ENCODE measurements at regions of chr7 and their contacts with region 1.

Region 1: DNA sequence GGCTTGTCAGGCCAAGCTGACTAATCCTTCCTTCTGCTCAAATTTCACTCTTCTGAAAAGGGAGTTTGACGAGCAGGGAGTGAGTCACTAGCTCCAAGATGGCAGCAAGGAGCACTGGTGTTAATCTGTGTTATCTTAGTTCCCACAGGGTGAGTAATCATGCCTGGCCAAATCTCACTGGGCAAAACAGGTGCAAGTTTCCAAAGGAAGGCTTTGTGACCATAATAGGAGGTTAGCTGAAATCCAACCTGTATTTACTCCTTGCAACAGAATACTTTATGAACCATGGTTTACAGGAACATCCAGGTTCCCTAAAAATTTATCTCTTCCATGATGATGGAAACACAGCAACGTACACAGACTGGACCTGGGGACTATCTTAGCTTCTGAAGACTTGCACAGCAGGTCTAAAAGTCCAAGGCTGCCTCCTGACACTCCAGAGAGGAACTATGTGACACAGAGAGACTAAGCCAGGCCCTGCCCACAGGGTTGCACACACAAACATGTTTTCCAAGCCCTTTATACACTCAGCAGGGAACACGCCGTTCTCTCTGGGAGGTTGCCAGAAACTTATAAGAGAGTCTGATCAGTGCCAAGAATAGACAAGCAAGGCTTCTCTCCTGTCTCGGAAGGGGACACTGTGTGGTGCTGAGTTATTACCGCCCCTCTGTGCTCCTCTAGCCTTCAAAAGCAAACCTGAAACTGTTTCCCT is 46.3 kb downstream of the PDK4 start:
- DNase-seq: peak; percentile 86 to 97
- H3K4me3 ChIP-seq: peak overlapping the region in 2 of 3 donors; percentile 26 to 54
- H3K27ac ChIP-seq: peak overlapping the region; percentile 97 to 98
- H3K4me1 ChIP-seq: peaks cover 16 to 18% of the 10 kb centered on the region in 2 donors
- H3K27me3 ChIP-seq: no peaks in the 10 kb centered on the region
- CTCF ChIP-seq: no peak
- POLR2A ChIP-seq: peak; percentile 29

Region 2: DNA sequence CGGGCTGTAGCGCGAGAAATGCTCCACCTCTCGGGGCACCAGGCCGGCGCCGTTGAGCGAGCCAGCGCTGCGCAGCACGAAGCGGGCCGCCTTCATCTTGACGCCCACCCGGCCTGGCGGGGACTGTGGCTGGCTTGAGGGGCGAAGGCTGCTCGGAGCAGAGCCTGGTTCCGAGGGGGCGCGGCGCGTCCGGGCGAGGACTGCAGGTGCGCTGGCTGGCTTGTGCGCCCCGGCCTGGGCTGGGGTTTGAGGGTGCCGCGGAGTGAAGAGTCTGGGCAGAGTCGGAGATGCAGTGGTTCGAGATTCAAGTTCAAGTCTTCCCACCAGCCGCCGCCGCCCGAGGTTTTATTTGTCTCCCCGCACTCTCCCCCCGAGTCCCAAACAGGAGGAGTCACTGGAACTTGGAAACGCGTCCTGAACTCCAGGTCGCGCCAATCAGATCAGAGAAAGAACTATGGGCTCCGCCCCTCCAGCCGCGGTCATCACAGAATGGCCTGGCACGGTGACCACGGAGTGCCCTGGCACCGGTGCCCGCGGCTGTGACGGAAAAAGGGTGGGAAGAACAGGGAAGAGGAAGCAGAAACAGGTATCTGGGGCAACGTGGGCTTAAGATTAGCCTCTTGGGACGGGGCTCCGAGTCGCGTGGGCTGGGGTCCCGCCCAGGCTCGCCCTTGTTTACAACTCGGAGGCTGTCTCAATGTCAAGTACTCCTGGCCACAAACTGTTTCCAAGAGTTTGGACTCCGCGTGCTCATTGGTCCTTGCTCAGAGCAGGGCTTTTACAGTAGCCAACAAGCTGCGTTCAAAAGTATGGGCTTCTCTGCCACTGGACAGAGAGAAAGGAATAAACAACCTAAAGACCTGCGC is 46.5 kb after region 1 on chr7 and contains the start of gene PDK4:
- intact Hi-C with region 1: loop called (anchors 5 kb)
- DNase-seq: peak; percentile 97 to 98
- H3K4me3 ChIP-seq: peak within 1 kb of the TSS; percentile 82 to 88 (median 87)
- H3K27ac ChIP-seq: peak within 1 kb of the TSS; percentile 95 to 96
- H3K4me1 ChIP-seq: peaks cover 0 to 7% of the 10 kb centered on the region in 2 donors
- H3K27me3 ChIP-seq: no peaks in the 10 kb centered on the region
- CTCF ChIP-seq: peak in 1 of 3 donors; percentile 19
- POLR2A ChIP-seq: peak; percentile 79
- total RNA-seq, gene PDK4: 507 to 797 (median 729) TPM